Activated naive CD4-positive, alpha-beta T cell treated with anti-CD3 and anti-CD28 coated beads for 36 hours (primary cell): ENCODE measurements at regions of chr10 and their contacts with region 1.

Region 1: GRCh38 chr10:30986053-30986555 is 45.6 kb downstream of the ZNF438 start:
- DNase-seq: no peak
- H3K4me3 Mint-ChIP-seq: no peak overlapping the region
- H3K27ac Mint-ChIP-seq: peak overlapping the region; percentile 55
- H3K4me1 Mint-ChIP-seq: peaks cover 12% of the 10 kb centered on the region
- H3K27me3 Mint-ChIP-seq: no peaks in the 10 kb centered on the region

Region 2: GRCh38 chr10:30963992-30964930 is 21.8 kb before region 1 on chr10:
- CTCF ChIA-PET with region 1: no interaction called
- intact Hi-C with region 1: loop called (anchors 1 kb)
- DNase-seq: peak; percentile 12
- H3K4me3 Mint-ChIP-seq: no peak overlapping the region
- H3K27ac Mint-ChIP-seq: peak overlapping the region; percentile 57
- H3K4me1 Mint-ChIP-seq: peaks cover 16% of the 10 kb centered on the region
- H3K27me3 Mint-ChIP-seq: no peaks in the 10 kb centered on the region

Region 3: DNA sequence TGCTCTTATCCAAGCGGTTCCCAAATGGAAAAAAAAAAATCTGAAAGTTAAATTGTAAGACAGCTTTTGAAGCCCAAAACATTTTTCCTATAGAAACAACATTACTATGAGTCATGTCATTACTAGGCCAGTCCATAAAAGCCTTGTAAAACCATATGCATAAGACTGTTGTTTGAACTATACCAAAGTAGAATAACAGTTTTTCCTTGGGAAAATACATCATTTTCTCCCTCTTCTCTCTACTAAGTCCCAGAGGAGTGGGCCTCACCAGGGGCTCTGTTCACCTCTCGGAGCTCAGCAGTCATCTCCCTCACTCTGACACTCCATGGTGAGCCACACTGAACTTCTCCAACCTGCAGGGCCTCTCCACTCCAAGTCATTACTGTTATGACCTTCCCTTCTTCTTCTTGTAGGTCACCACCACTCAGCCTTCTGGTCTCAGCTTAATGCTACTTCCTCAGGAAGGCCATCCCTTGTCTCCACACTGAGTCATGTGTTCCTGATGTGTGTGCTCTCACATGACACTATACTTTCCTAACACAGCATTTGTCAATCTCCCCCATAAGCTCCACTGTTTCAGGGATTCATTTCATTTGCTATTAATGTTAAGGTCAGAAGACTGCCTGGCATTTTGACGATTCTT is 13.1 kb after region 1 on chr10:
- CTCF ChIA-PET with region 1: no interaction called
- intact Hi-C with region 1: loop called (anchors 1 kb)
- DNase-seq: peak; percentile 14
- H3K4me3 Mint-ChIP-seq: peak overlapping the region; percentile 22
- H3K27ac Mint-ChIP-seq: no peak overlapping the region
- H3K4me1 Mint-ChIP-seq: peaks cover 25% of the 10 kb centered on the region
- H3K27me3 Mint-ChIP-seq: no peaks in the 10 kb centered on the region

Region 4: GRCh38 chr10:31062856-31063255 is 76.8 kb after region 1 on chr10:
- CTCF ChIA-PET with region 1: no interaction called
- intact Hi-C with region 1: no loop called
- DNase-seq: no peak
- H3K4me3 Mint-ChIP-seq: no peak overlapping the region
- H3K27ac Mint-ChIP-seq: no peak overlapping the region
- H3K4me1 Mint-ChIP-seq: no peaks in the 10 kb centered on the region
- H3K27me3 Mint-ChIP-seq: peaks cover 2% of the 10 kb centered on the region

Region 5: GRCh38 chr10:31146491-31147209 is 160.5 kb after region 1 on chr10:
- CTCF ChIA-PET with region 1: no interaction called
- intact Hi-C with region 1: loop called (anchors 5 kb)
- DNase-seq: peak; percentile 49
- H3K4me3 Mint-ChIP-seq: peak overlapping the region; percentile 6
- H3K27ac Mint-ChIP-seq: no peak overlapping the region
- H3K4me1 Mint-ChIP-seq: peaks cover 19% of the 10 kb centered on the region
- H3K27me3 Mint-ChIP-seq: peaks cover 7% of the 10 kb centered on the region